A549 (cell line): ENCODE measurements at regions of chr4 and their contacts with region 1.

Region 1: GRCh38 chr4:76511947-76512346 is 76.9 kb downstream of the SHROOM3 start:
- DNase-seq: no peak
- ATAC-seq: no peak
- H3K4me3 ChIP-seq: no peak overlapping the region
- H3K27ac ChIP-seq: peak overlapping the region; percentile 41 to 54; a peak in 2 of 6 replicates
- H3K4me1 ChIP-seq: no peaks in the 10 kb centered on the region
- CTCF ChIP-seq: no peak
- EP300 ChIP-seq: no peak
- POLR2A ChIP-seq: no peak
- RAD21 ChIP-seq: no peak

Region 2: GRCh38 chr4:76246025-76246424 is 265.9 kb before region 1 on chr4:
- CTCF ChIA-PET with region 1: no interaction called
- POLR2A ChIA-PET with region 1: no interaction called
- DNase-seq: no peak
- ATAC-seq: peak; percentile 35 to 56; a peak in 2 of 6 replicates
- H3K4me3 ChIP-seq: no peak overlapping the region
- H3K27ac ChIP-seq: no peak overlapping the region
- H3K4me1 ChIP-seq: 0 out of 3 replicates have a peak, but pooled peaks cover 3% of the 10 kb centered on the region
- CTCF ChIP-seq: no peak
- EP300 ChIP-seq: no peak
- POLR2A ChIP-seq: no peak
- RAD21 ChIP-seq: no peak

Region 3: DNA sequence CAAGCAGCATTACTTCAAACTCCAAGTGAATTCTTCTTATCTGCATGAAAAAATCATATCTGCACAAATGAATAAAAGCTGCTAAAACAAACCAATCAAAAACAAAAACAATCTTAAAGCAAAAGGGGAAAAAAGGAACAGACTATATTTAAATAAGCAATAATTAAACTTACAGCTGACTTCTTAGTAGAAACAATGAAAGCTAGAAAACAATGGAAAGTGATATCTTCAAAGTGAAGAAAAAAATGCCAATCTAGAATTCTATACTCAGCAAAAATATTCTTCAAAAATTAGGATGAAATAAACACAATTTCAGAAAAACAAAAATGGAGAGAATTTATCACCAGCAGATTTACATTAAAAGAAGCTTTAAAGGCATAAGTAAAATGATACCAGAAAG is 185.4 kb before region 1 on chr4:
- CTCF ChIA-PET with region 1: no interaction called
- POLR2A ChIA-PET with region 1: no interaction called
- DNase-seq: no peak
- ATAC-seq: no peak
- H3K4me3 ChIP-seq: no peak overlapping the region
- H3K27ac ChIP-seq: no peak overlapping the region
- H3K4me1 ChIP-seq: no peaks in the 10 kb centered on the region
- CTCF ChIP-seq: no peak
- EP300 ChIP-seq: no peak
- POLR2A ChIP-seq: no peak
- RAD21 ChIP-seq: no peak

Region 4: DNA sequence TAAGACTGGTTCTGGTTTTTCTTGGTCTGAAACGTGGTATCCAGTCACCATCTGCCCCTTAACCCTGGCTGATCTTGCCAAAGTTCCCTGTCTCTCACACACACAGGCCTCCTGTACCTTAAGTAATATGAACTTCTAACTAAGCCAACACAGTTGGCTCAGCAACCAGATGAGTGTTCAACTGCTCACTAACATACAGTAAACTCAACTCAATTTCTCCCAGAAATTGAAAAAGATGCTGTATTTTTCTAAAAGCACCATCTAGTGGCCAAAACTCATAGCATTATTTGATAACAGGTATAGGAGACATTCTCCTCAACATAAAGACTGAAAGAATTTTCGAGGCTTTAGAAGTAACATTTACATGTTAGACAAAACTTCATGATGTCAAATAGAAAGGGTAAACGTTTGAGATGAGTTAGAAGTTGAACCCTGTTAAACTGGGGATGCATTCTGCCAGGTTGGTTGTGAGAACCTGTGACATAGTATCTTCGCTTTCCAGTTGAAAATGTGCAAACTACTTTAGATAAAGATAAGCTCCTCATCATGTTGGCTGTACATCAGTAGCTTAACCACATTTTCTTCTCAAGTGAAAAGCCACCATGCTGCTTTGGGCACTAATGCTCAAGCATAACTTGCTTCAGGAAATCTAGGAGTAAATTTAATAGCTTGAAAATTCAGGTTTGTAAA is 532.7 kb after region 1 on chr4:
- CTCF ChIA-PET with region 1: interaction called, 21 read pairs
- POLR2A ChIA-PET with region 1: no interaction called
- DNase-seq: peak in 1 of 2 experiments; percentile 8
- ATAC-seq: peak; percentile 52 to 73; a peak in 4 of 6 replicates
- H3K4me3 ChIP-seq: no peak overlapping the region
- H3K27ac ChIP-seq: no peak overlapping the region
- H3K4me1 ChIP-seq: 0 out of 3 replicates have a peak, but pooled peaks cover 7% of the 10 kb centered on the region
- CTCF ChIP-seq: peak; percentile 60
- EP300 ChIP-seq: no peak
- POLR2A ChIP-seq: no peak
- RAD21 ChIP-seq: peak; percentile 26 to 42; a peak in 4 of 5 replicates